Adrenal gland (tissue), 19 donors: ENCODE measurements at regions of chr6 and their contacts with region 1.

Region 1: DNA sequence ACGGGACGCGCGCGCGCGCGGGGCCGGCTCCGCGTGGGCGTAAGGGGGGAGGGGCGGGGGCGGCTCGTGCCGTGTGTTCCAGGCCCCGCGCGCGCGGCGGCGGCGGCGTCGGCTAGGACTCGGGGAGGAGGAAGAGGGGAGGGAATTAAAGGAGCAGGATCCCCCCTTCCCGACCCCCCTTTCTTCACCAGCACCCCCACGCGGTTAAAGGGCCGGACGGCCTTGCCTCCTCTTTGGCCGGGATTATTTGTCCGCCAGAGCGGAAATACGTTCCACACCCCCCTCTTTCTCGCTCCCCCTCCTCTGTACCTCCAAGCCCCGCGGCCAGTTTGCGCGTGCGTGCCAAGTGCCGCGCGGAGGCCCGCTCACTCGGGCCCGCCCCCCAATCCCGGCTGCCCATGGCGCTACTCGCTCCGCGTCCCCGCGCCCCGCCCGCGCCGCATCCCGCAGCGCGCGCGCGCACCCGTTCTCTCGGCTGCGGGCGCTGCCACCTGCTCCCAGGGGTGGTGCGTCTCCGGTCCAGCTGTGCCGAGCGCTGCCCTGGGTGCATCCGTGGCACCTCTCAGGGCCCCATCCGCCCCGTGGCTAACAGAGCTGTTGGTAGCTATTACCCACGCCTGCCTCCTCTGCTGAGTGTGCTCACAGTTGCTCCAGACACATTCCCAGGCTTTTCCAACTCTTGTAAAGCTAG is at the start of gene ZBTB12:
- DNase-seq: peak; percentile 95 to 97 (median 95)
- H3K4me3 ChIP-seq: peak within 1 kb of the TSS in 3 of 4 donors; percentile 26 to 86 (median 79)
- H3K27ac ChIP-seq: peak within 1 kb of the TSS; percentile 50 to 90 (median 81)
- H3K4me1 ChIP-seq: peaks cover 11 to 38% of the 10 kb centered on the region in 2 donors
- H3K27me3 ChIP-seq: no peaks in the 10 kb centered on the region
- CTCF ChIP-seq: peak in 1 of 6 experiments; percentile 22
- POLR2A ChIP-seq: peak; percentile 36 to 79
- total RNA-seq, gene ZBTB12: 0.69 to 14.5 (median 3.3) TPM

Region 2: DNA sequence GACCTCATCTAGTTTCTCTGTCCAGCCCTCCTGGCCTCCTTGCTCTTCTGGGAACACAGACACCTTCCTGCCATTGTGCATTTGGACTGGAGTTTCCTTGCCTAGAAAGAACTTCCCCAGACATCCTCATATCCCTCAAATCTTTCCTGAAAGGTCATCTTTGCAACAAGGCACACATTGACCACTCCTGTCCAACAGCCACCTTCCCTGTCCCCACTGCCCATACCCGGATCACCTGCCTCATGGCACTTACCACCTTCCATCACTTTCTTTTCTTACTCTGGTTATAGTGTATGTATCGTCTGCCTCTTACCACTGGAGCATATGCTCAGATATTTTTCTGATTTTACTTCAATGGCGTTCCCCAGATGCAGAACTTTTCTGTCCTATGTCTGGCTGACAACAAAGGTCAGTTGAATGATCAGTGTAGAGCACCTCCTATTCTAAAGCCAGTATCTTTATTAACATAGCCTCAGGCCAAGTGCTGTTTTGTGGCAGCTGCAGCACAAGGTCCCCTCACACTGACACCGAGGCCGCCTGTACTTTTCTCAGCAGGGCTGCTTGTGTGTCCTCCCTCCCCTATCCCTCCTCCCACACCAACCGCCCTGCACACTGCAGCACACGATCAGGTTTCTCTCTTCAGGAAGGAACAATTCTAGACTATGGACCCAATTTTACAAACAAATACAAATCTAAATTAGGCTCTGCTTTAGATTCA is 634.3 kb before region 1 on chr6:
- intact Hi-C with region 1: no loop called
- DNase-seq: peak in 1 of 7 donors; percentile 64
- H3K4me3 ChIP-seq: no peak overlapping the region
- H3K27ac ChIP-seq: no peak overlapping the region
- H3K4me1 ChIP-seq: peaks cover 0 to 4% of the 10 kb centered on the region in 2 donors
- H3K27me3 ChIP-seq: no peaks in the 10 kb centered on the region
- CTCF ChIP-seq: no peak
- POLR2A ChIP-seq: no peak

Region 3: GRCh38 chr6:31952140-31952805 is 50.2 kb after region 1 on chr6:
- intact Hi-C with region 1: loop called (anchors 5 kb)
- DNase-seq: peak; percentile 67 to 85 (median 77)
- H3K4me3 ChIP-seq: no peak overlapping the region
- H3K27ac ChIP-seq: peak overlapping the region in 1 of 5 donors; percentile 24
- H3K4me1 ChIP-seq: no peaks in the 10 kb centered on the region
- H3K27me3 ChIP-seq: no peaks in the 10 kb centered on the region
- CTCF ChIP-seq: peak; percentile 67 to 80 (median 74)
- POLR2A ChIP-seq: no peak

Region 4: DNA sequence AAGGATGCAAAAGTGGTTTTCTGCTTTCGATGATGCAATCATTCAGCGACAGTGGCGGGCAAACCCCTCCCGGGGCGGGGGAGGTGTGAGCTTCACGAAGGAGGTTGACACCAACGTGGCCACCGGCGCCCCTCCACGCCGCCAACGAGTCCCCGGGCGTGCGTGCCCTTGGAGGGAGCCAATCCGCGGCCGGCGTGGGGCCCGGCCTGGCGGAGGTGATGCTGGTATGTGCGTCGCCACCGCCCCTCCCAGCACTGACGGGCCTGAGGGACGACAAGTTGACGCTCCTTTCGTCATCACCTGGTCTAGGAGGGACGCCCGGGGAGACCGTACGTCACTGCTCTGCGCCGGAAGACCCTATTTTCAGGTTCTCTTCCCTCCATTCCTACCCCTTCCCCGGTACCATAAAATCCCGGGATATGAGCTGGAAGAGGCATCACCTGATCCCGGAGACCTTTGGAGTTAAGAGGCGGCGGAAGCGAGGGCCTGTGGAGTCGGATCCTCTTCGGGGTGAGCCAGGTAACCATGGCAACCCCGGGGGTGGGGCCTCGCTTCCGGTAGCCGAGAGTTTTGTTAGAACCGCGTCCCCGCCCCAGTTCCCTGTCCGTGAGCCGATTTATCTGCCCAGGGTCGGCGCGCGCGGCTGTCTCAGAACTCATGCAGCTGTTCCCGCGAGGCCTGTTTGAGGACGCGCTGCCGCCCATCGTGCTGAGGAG is 70.1 kb after region 1 on chr6 and contains the start of gene DXO:
- intact Hi-C with region 1: no loop called
- DNase-seq: peak; percentile 95 to 99 (median 98)
- H3K4me3 ChIP-seq: peak within 1 kb of the TSS in 3 of 4 donors; percentile 40 to 89 (median 82)
- H3K27ac ChIP-seq: peak within 1 kb of the TSS; percentile 95 to 99 (median 99)
- H3K4me1 ChIP-seq: peaks cover 20 to 40% of the 10 kb centered on the region in 2 donors
- H3K27me3 ChIP-seq: no peaks in the 10 kb centered on the region
- CTCF ChIP-seq: no peak
- POLR2A ChIP-seq: peak; percentile 54 to 70
- total RNA-seq, gene DXO: 19.9 to 57.1 (median 44.6) TPM

Region 5: DNA sequence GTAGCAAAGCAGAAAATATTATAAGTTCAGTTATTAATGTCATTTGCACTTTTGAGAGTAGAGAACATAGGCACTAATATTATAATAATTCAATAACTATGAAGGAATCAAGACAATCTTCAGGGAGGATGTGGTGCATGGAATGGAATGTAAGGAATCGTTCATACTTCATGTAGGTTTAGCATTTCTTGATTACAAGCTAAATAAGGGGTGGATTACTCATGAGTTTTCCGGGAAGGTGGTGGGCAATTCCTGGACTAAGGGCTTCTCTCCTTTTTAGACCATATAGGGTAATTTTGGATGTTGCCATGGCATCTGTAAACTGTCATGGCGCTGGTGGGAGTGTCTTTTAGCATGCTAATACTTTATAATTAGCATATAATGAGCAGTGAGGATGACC is 513.9 kb after region 1 on chr6:
- intact Hi-C with region 1: no loop called
- DNase-seq: no peak
- H3K4me3 ChIP-seq: no peak overlapping the region
- H3K27ac ChIP-seq: no peak overlapping the region
- H3K4me1 ChIP-seq: no peaks in the 10 kb centered on the region
- H3K27me3 ChIP-seq: peaks cover 42% of the 10 kb centered on the region
- CTCF ChIP-seq: no peak
- POLR2A ChIP-seq: no peak